H1 (cell line): ENCODE measurements at regions of chr1 and their contacts with region 1.

Region 1: GRCh38 chr1:159161001-159161718 is 10.3 kb upstream of the CADM3 start:
- DNase-seq: peak in 1 of 2 experiments; percentile 82
- H3K4me3 ChIP-seq: no peak overlapping the region
- H3K27ac ChIP-seq: no peak overlapping the region
- H3K4me1 ChIP-seq: peaks cover 0 to 4% (median 1%) of the 10 kb centered on the region in 4 experiments; a peak in 2 of 7 replicates
- H3K27me3 ChIP-seq: no peaks in the 10 kb centered on the region
- CTCF ChIP-seq: peak; percentile 96 to 100 (median 100)
- EP300 ChIP-seq: no peak
- POLR2A ChIP-seq: no peak
- RAD21 ChIP-seq: peak; percentile 100

Region 2: DNA sequence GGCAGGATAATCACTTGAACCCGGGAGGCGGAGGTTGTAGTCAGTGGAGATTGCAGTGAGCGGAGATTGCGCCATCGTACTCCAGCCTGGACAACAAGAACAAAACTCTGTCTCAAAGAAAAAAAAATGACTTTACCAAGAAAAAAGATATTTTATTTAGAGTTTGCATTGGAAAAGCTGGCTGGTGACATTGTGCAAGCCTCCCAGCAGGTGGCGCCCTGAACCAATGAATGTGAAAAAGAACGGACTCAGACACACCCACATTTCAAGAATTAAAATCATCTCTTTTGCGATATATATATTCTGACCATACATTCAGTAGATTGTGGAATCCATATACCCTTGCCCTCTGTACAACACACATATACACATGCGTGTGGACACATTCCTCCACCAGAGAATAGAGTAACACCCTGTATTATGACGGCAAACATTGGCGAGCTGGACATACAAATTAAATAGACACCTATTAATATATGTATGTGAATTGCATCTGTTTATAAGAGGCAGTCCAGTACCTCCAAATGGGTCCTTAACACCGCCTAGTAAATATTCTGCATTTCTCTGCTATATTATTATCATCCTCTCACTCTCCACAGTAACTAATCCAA is 28.8 kb before region 1 on chr1:
- CTCF ChIA-PET with region 1: interaction called, 35 read pairs
- POLR2A ChIA-PET with region 1: no interaction called
- DNase-seq: peak in 1 of 2 experiments; percentile 80
- H3K4me3 ChIP-seq: no peak overlapping the region
- H3K27ac ChIP-seq: no peak overlapping the region
- H3K4me1 ChIP-seq: no peaks in the 10 kb centered on the region
- H3K27me3 ChIP-seq: no peaks in the 10 kb centered on the region; a peak in 1 of 7 replicates
- CTCF ChIP-seq: peak; percentile 64 to 73 (median 70)
- EP300 ChIP-seq: no peak
- POLR2A ChIP-seq: no peak
- RAD21 ChIP-seq: peak; percentile 83 to 85

Region 3: DNA sequence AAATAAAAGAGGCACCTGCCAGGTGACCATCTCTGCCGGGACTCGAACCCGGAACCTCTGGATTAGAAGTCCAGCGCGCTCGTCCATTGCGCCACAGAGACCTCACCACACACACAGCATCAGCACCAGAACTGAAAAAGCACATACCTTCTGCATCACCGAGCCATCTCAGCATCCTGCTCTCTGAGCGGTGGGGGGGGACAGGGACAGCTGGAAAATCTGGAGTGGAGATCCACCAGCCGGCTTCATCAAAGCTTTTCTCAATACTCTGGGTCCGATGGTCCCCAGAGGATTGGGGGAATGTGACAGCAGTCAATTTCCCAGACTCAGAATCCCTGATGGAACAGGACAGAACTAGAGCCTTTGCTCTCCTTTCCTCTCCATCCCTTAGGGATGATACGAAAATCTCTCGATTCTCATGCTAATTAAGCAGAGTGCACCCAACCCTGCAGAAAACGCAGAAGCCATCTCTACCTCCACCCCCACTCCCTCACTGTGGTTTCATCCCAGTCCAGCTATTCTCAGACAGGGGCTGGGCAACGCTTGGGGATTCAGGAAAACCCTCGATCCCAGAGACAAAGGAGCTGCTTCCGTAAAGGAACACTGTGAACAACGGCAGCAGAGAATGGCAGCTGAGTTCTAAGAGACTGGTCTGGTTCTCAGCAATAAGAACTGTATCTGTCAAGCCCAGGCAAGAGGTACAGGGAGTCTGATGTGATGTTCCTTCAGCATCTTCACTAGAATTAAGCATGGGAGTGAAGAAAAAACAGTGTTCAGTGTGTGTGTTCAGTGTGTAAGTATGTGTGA is 19.4 kb before region 1 on chr1:
- CTCF ChIA-PET with region 1: interaction called, 14 read pairs
- POLR2A ChIA-PET with region 1: no interaction called
- DNase-seq: peak in 1 of 2 experiments; percentile 58
- H3K4me3 ChIP-seq: peak overlapping the region; percentile 10 to 44 (median 20); a peak in 5 of 8 replicates
- H3K27ac ChIP-seq: no peak overlapping the region
- H3K4me1 ChIP-seq: peaks cover 6 to 12% (median 7%) of the 10 kb centered on the region in 4 experiments
- H3K27me3 ChIP-seq: no peaks in the 10 kb centered on the region
- CTCF ChIP-seq: no peak
- EP300 ChIP-seq: no peak
- POLR2A ChIP-seq: no peak
- RAD21 ChIP-seq: no peak

Region 4: DNA sequence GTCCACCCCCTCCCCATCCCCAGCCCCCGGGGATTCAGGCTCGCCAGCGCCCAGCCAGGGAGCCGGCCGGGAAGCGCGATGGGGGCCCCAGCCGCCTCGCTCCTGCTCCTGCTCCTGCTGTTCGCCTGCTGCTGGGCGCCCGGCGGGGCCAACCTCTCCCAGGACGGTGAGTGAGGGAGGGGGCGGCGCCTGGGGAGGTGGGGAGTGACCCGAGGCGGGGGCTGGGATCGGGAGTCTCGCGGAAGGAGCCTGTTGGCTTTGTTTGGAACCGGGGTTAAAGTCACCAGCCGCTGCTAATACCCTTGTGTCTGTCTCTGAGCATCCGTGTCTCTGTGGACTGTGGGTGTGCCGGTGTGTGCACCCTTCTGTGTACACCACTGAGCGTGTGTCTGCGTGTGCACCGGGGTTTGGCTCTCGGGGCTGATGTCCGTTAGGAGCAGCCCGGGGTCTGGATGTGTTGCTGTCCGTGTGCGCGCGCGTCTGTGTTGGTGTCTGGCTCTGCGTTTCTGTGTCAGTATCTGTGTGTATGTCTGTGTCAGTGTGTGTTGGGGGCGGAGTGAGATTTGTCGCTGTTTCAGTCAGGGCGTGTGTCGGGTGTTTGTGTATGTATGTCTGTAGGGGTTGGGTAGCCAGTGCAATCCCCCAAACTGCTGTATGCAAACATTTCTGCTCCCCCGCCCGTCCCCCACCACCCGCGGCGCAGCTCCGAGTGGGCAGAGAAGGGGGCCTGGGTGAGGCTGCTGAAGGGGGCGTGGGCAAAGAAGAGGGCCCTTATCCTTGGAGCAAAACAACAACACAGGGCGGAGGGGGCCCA is 10.7 kb after region 1 on chr1:
- CTCF ChIA-PET with region 1: interaction called, 24 read pairs
- POLR2A ChIA-PET with region 1: no interaction called
- DNase-seq: peak in 1 of 2 experiments; percentile 80
- H3K4me3 ChIP-seq: peak overlapping the region; percentile 87 to 99 (median 96)
- H3K27ac ChIP-seq: no peak overlapping the region
- H3K4me1 ChIP-seq: peaks cover 0 to 11% (median 3%) of the 10 kb centered on the region in 4 experiments; a peak in 6 of 7 replicates
- H3K27me3 ChIP-seq: peaks cover 0 to 3% (median 0%) of the 10 kb centered on the region in 4 experiments; a peak in 2 of 7 replicates
- CTCF ChIP-seq: no peak
- EP300 ChIP-seq: no peak
- POLR2A ChIP-seq: no peak
- RAD21 ChIP-seq: no peak

Region 5: GRCh38 chr1:159177273-159177907 is 16.2 kb after region 1 on chr1:
- CTCF ChIA-PET with region 1: interaction called, 24 read pairs
- POLR2A ChIA-PET with region 1: no interaction called
- DNase-seq: peak in 1 of 2 experiments; percentile 74
- H3K4me3 ChIP-seq: no peak overlapping the region
- H3K27ac ChIP-seq: no peak overlapping the region
- H3K4me1 ChIP-seq: peaks cover 3 to 13% (median 3%) of the 10 kb centered on the region in 4 experiments; a peak in 6 of 7 replicates
- H3K27me3 ChIP-seq: no peaks in the 10 kb centered on the region
- CTCF ChIP-seq: no peak
- EP300 ChIP-seq: no peak
- POLR2A ChIP-seq: no peak
- RAD21 ChIP-seq: 0 out of 4 replicates have a peak, but pooled peaks of 1 of the 2 experiments have one; percentile 4

Region 6: GRCh38 chr1:159197561-159198557 is 36.7 kb after region 1 on chr1:
- CTCF ChIA-PET with region 1: interaction called, 660 read pairs
- POLR2A ChIA-PET with region 1: interaction called, 4 read pairs
- DNase-seq: peak in 1 of 2 experiments; percentile 89
- H3K4me3 ChIP-seq: no peak overlapping the region
- H3K27ac ChIP-seq: no peak overlapping the region
- H3K4me1 ChIP-seq: no peaks in the 10 kb centered on the region
- H3K27me3 ChIP-seq: no peaks in the 10 kb centered on the region
- CTCF ChIP-seq: peak; percentile 85 to 99 (median 98)
- EP300 ChIP-seq: no peak
- POLR2A ChIP-seq: no peak
- RAD21 ChIP-seq: peak; percentile 77 to 82